Right ventricle myocardium superior (tissue), 1 donor: ENCODE measurements at regions of chr15 and their contacts with region 1.

Region 1: DNA sequence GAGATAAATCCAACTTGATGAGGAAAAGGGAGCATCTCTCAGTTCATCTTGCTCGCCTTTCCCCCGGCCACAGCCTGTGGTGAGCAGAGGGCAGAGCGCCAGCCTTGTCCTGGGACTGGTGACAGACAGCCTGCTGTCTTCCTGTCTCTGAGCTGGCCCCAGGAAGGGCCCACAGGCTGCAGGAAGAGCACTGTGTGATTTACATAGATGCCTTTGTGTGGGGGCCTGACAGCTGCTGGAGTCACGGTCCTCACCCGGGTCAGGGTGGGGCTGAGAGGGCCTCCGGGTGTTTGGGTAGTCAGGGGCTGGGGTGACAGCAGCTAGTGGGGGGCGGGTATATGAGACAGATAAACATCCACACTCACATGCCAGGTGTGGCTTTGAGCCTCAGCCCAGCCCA is 29.3 kb downstream of the PLA2G4D start:
- DNase-seq: peak; percentile 60
- ATAC-seq: no peak

Region 2: DNA sequence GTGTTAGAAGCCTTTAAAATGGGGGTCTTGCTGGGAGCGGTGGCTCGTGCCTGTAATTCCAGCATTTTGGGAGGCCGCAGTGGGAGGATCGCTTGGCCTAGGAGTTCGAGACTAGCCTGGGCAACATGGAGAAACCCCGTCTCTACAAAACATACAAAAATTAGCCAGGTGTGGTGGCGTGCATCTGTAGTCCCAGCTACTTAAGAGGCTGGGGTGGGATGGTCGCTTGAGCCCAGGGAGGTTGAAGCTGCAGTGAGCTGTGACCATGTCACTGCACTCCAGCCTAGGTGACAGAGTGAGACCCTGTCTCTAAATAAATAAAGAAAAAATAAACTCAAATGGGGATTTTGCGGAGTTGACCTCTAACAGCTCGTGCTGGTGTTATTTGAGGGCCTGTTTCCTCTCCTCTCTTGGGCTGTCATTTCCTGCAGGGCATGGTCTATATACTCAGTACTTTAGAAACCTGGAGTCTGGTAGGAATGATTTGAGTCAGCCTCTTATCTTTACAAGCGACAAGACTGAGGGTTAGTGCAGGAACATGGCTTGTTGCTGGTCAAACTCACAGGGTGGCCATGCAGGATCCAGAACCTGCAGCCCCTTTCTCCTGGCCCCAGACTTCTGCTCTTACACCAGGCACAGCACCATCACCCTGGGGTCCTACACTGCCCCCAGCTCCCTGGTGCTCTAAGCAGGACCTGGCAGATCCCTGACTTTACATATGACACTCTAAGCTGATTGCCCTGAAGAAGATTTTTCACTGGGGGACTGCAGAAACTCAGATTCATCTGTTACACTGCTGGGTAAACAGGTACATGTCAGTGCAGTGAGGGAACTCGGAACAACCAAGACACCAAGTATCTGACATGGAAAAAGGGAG is 107.8 kb before region 1 on chr15:
- intact Hi-C with region 1: no loop called
- DNase-seq: no peak
- ATAC-seq: peak; percentile 49

Region 3: DNA sequence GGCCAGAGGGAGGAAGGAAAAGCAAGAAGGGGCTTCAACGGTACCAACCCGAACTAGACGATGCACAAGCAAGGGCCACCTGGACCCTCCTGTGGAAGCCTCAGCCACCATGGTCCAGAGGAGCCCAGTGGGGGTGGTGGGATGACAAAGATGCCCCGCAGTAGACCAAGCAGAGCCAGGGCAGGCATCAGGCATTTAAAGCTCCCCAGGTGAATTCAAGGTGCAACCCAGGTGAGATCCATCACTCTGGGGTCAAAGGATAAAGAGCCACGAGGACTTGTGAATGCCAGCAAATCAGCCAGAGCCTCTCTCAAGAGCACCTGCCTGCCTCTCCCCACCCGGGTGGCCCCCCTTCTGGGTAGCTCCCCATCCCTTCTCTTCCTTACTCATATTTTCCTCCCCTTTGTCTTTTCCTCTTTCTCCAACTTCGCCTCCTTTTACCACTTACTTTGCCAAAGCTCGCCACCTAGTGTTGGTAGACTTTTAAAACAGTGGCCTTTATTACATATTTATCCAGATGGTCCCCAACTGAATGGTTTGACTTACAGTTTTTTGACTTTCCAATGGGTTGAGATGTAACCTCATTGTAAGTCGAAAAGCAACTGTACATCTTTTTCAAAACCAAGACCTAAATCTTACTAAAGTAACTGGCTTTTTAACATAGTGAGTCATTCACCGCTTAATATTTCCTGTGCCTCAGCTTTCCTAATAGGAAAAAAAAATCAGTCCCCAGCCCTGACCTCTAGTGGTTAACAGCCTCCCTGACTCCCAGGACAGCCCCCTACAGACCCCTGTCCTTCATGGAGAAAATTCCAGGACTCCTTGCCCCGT is 72.6 kb after region 1 on chr15:
- intact Hi-C with region 1: loop called (anchors 5 kb)
- DNase-seq: no peak
- ATAC-seq: peak; percentile 51